ENCODE measurements at regions of chr22 and their contacts with region 1.

Region 1: DNA sequence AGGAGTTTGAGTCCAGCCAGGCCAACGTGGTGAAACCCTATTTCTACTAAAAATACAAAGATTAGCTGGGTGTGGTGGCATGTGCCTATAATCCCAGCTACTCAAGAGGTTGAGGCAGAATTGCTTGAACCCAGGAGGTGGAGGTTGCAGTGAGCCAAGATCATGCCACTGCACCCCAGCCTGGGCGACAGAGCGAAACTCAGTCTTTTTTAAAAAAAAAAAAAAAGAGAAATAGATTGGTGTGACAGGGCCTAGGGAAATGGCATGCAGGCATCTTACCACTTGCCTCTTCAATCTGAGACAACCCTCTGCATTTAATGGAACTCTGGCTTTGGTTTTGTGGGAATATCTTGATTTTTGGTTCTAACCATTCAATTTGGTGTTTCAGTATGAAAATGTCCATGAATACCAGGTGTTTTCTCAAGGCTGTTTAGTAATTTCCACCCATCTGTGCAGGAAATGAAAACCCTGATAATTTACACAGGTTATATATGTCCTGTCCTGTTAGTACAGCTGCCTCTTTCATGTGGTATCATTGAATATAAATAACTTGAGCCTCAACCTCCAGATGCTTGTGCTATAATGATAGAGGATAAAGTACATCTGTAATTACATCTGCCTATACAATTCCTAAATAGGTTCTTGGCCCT is 8.4 kb downstream of the XBP1 start:
- H3K4me3 Mint-ChIP-seq: no peak overlapping the region
- H3K27ac Mint-ChIP-seq: peak overlapping the region; percentile 46
- H3K4me1 Mint-ChIP-seq: peaks cover 31% of the 10 kb centered on the region
- H3K27me3 Mint-ChIP-seq: no peaks in the 10 kb centered on the region

Region 2: GRCh38 chr22:28829358-28830181 is 37.6 kb after region 1 on chr22:
- intact Hi-C with region 1: loop called (anchors 2 kb)
- H3K4me3 Mint-ChIP-seq: no peak overlapping the region
- H3K27ac Mint-ChIP-seq: peak overlapping the region; percentile 14
- H3K4me1 Mint-ChIP-seq: peaks cover 32% of the 10 kb centered on the region
- H3K27me3 Mint-ChIP-seq: no peaks in the 10 kb centered on the region

Region 3: GRCh38 chr22:28911777-28912669 is 120.1 kb after region 1 on chr22:
- intact Hi-C with region 1: no loop called
- H3K4me3 Mint-ChIP-seq: no peak overlapping the region
- H3K27ac Mint-ChIP-seq: no peak overlapping the region
- H3K4me1 Mint-ChIP-seq: no peaks in the 10 kb centered on the region
- H3K27me3 Mint-ChIP-seq: no peaks in the 10 kb centered on the region